ENCODE measurements at regions of chr19 and their contacts with region 1.

Region 1: GRCh38 chr19:51570962-51571575 is at the start of gene ZNF175:
- H3K4me3 Mint-ChIP-seq: peak within 1 kb of the TSS; percentile 89
- H3K27ac Mint-ChIP-seq: peak within 1 kb of the TSS; percentile 89
- H3K4me1 Mint-ChIP-seq: peaks cover 20% of the 10 kb centered on the region
- H3K27me3 Mint-ChIP-seq: peaks cover 3% of the 10 kb centered on the region

Region 2: GRCh38 chr19:51386882-51387520 is 184.1 kb before region 1 on chr19:
- intact Hi-C with region 1: no loop called
- H3K4me3 Mint-ChIP-seq: no peak overlapping the region
- H3K27ac Mint-ChIP-seq: peak overlapping the region; percentile 8
- H3K4me1 Mint-ChIP-seq: peaks cover 21% of the 10 kb centered on the region
- H3K27me3 Mint-ChIP-seq: no peaks in the 10 kb centered on the region

Region 3: DNA sequence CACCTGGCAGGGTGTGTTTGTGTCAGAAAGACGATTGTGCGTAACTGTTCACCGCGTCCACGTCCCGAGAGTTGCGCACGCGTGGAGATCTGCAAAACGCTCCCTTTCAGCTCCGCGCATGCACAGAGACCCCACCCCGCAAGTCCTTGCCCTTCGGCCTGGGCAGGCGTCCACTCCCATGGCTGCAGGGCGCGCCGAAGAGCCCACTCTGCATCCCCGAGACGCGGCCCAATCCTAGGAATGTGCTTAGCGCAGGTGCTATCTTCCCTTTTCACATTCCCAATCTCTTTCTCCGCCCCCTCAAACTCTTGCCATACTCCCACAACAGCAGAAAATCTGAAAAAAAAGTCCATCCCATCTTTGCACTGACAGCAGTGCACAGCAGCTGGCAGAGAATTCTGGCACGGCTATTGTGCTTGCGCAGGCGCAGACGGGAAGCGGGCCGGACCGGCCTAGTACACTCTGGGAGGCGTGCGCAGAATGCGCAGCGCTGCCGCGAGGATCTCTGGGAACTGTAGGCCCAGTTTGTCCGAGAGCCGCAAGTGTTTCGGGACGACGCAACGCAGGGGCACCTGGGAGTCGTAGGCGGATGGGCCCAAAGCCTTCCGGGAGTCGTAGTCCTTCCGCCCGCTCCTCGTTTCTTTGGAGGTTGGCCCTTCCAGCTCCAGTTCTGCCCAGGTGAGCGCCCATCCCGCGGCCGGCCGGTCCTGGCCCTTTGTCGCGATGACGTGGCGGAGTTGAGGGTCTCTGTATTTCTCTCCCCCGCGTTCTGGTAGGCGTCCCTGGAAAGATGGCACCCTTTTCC is 23.1 kb after region 1 on chr19:
- intact Hi-C with region 1: loop called (anchors 1 kb)
- H3K4me3 Mint-ChIP-seq: peak overlapping the region; percentile 94
- H3K27ac Mint-ChIP-seq: peak overlapping the region; percentile 87
- H3K4me1 Mint-ChIP-seq: peaks cover 33% of the 10 kb centered on the region
- H3K27me3 Mint-ChIP-seq: peaks cover 13% of the 10 kb centered on the region